SK-N-SH (cell line): ENCODE measurements at regions of chr5 and their contacts with region 1.

Region 1: GRCh38 chr5:149834246-149834855 is 104.2 kb downstream of the PPARGC1B start:
- DNase-seq: peak; percentile 81
- H3K4me3 ChIP-seq: no peak overlapping the region
- H3K27ac ChIP-seq: no peak overlapping the region
- H3K4me1 ChIP-seq: no peaks in the 10 kb centered on the region
- H3K27me3 ChIP-seq: no peaks in the 10 kb centered on the region
- CTCF ChIP-seq: peak; percentile 81
- EP300 ChIP-seq: no peak
- RAD21 ChIP-seq: peak; percentile 89

Region 2: GRCh38 chr5:149094981-149095380 is 739.4 kb before region 1 on chr5:
- CTCF ChIA-PET with region 1: no interaction called
- POLR2A ChIA-PET with region 1: no interaction called
- DNase-seq: no peak
- H3K4me3 ChIP-seq: no peak overlapping the region
- H3K27ac ChIP-seq: no peak overlapping the region
- H3K4me1 ChIP-seq: no peaks in the 10 kb centered on the region
- H3K27me3 ChIP-seq: no peaks in the 10 kb centered on the region
- CTCF ChIP-seq: no peak
- EP300 ChIP-seq: no peak
- RAD21 ChIP-seq: no peak

Region 3: DNA sequence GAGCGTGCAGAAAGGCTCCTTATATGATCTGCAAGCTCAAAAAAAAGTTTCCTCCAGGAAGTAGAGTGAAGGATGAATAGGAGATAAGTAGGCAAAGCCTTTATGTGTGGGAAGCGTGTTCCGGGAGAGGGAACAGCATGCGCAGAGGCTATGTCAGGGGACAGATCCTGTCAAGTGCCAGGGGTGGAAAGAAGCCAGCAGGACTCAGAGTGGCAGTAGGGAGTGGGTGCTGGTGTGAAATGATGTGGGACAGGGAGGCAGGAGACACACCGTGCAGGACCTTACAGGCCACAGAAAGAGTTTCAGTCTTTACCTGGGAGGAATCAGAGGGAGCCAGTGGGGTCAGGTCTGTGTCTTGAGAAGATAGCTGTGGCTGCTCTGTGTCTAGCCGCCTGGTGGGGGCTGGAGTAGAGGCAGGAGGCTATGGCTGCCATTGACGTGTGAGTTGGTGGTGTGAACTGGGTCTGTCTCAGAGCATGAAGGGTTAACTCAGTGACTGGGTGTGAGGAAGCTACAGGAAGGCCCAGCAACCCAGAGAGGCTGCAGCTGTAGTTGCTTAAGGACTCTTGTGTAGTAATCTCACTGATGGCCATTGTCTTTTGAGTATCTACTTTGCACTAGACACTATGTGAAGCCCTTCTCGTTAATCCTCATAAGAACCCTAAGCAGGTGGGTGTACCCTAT is 32.9 kb before region 1 on chr5:
- CTCF ChIA-PET with region 1: interaction called, 12 read pairs
- POLR2A ChIA-PET with region 1: no interaction called
- DNase-seq: no peak
- H3K4me3 ChIP-seq: no peak overlapping the region
- H3K27ac ChIP-seq: no peak overlapping the region
- H3K4me1 ChIP-seq: peaks cover 20 to 24% of the 10 kb centered on the region in 2 experiments
- H3K27me3 ChIP-seq: no peaks in the 10 kb centered on the region
- CTCF ChIP-seq: no peak
- EP300 ChIP-seq: no peak
- RAD21 ChIP-seq: no peak

Region 4: GRCh38 chr5:149809931-149810617 is 24.3 kb before region 1 on chr5:
- CTCF ChIA-PET with region 1: interaction called, 20 read pairs
- POLR2A ChIA-PET with region 1: no interaction called
- DNase-seq: no peak
- H3K4me3 ChIP-seq: no peak overlapping the region
- H3K27ac ChIP-seq: no peak overlapping the region
- H3K4me1 ChIP-seq: peaks cover 6 to 13% of the 10 kb centered on the region in 2 experiments; a peak in 2 of 4 replicates
- H3K27me3 ChIP-seq: no peaks in the 10 kb centered on the region
- CTCF ChIP-seq: no peak
- EP300 ChIP-seq: no peak
- RAD21 ChIP-seq: no peak

Region 5: DNA sequence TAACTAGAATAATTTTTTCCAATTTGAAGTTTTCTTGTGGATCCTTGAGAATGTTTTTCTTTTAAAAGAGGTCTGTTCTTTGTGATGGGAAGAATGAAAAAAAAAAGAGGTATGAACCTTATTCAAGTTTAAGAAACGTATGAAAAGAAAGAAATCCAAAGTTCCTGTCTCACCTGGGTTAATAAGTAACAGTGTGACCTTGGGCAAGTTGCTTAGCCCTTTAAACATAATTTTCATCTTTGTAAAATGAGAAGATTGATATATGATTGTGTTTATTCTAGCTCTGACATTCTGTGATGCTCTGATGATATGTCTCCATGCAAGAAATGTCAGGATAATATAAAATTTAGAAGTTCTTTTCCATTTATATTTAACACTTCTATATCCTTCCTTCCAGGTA is 145.5 kb after region 1 on chr5:
- CTCF ChIA-PET with region 1: interaction called, 18 read pairs
- POLR2A ChIA-PET with region 1: no interaction called
- DNase-seq: no peak
- H3K4me3 ChIP-seq: no peak overlapping the region
- H3K27ac ChIP-seq: no peak overlapping the region
- H3K4me1 ChIP-seq: no peaks in the 10 kb centered on the region
- H3K27me3 ChIP-seq: no peaks in the 10 kb centered on the region
- CTCF ChIP-seq: no peak
- EP300 ChIP-seq: no peak
- RAD21 ChIP-seq: no peak

Region 6: GRCh38 chr5:150000256-150000989 is 166.1 kb after region 1 on chr5 and contains the starts of genes HMGXB3 and TIGD6:
- CTCF ChIA-PET with region 1: interaction called, 506 read pairs
- POLR2A ChIA-PET with region 1: interaction called, 3 read pairs
- DNase-seq: peak; percentile 97
- H3K4me3 ChIP-seq: peak within 1 kb of the TSS; percentile 83 to 96
- H3K27ac ChIP-seq: peak within 1 kb of the TSS; percentile 85 to 88
- H3K4me1 ChIP-seq: peaks cover 13 to 26% of the 10 kb centered on the region in 2 experiments; a peak in 3 of 4 replicates
- H3K27me3 ChIP-seq: no peaks in the 10 kb centered on the region
- CTCF ChIP-seq: no peak
- EP300 ChIP-seq: no peak
- RAD21 ChIP-seq: no peak
- polyA plus RNA-seq, gene HMGXB3: 28.8 and 39.9 TPM in 2 replicates
- polyA plus RNA-seq, gene TIGD6: 4.7 and 4.8 TPM in 2 replicates

Region 7: DNA sequence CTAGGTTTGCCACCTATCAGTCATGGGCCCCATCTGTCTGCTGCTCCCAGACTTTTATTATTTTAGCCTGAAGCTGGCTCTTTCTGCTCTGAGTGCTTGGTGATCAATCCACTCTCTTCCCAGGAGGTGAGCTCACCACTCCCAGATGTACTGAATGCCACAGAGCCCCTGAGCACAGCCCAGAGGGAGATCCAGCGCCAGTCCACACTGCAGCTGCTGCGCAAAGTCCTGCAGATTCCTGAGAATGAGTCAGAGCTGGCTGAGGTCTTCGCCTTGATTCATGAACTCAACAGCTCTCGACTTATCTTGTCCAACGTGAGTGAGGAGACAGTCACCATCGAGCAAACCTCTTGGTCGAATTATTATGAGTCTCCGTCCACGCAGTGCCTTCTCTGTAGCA is 202.2 kb after region 1 on chr5:
- CTCF ChIA-PET with region 1: no interaction called
- POLR2A ChIA-PET with region 1: no interaction called
- DNase-seq: no peak
- H3K4me3 ChIP-seq: no peak overlapping the region
- H3K27ac ChIP-seq: peak overlapping the region; percentile 82 to 85
- H3K4me1 ChIP-seq: peaks cover 2 to 14% of the 10 kb centered on the region in 2 experiments; a peak in 3 of 4 replicates
- H3K27me3 ChIP-seq: no peaks in the 10 kb centered on the region
- CTCF ChIP-seq: no peak
- EP300 ChIP-seq: peak in 1 of 2 experiments; percentile 82; a peak in 2 of 4 replicates
- RAD21 ChIP-seq: no peak